Activated naive CD4-positive, alpha-beta T cell treated with anti-CD3 and anti-CD28 coated beads for 36 hours (primary cell): ENCODE measurements at regions of chr1 and their contacts with region 1.

Region 1: GRCh38 chr1:234730770-234731568 is 121.0 kb upstream of the IRF2BP2 start:
- DNase-seq: peak; percentile 83
- H3K4me3 Mint-ChIP-seq: peak overlapping the region; percentile 25
- H3K27ac Mint-ChIP-seq: peak overlapping the region; percentile 89
- H3K4me1 Mint-ChIP-seq: peaks cover 51% of the 10 kb centered on the region
- H3K27me3 Mint-ChIP-seq: no peaks in the 10 kb centered on the region

Region 2: GRCh38 chr1:234271243-234271606 is 459.7 kb before region 1 on chr1:
- CTCF ChIA-PET with region 1: no interaction called
- intact Hi-C with region 1: loop called (anchors 1 kb)
- DNase-seq: peak; percentile 22
- H3K4me3 Mint-ChIP-seq: no peak overlapping the region
- H3K27ac Mint-ChIP-seq: no peak overlapping the region
- H3K4me1 Mint-ChIP-seq: peaks cover 26% of the 10 kb centered on the region
- H3K27me3 Mint-ChIP-seq: peaks cover 28% of the 10 kb centered on the region

Region 3: GRCh38 chr1:234699795-234700665 is 30.9 kb before region 1 on chr1:
- CTCF ChIA-PET with region 1: no interaction called
- intact Hi-C with region 1: no loop called
- DNase-seq: peak; percentile 45
- H3K4me3 Mint-ChIP-seq: no peak overlapping the region
- H3K27ac Mint-ChIP-seq: no peak overlapping the region
- H3K4me1 Mint-ChIP-seq: peaks cover 12% of the 10 kb centered on the region
- H3K27me3 Mint-ChIP-seq: no peaks in the 10 kb centered on the region

Region 4: GRCh38 chr1:234758851-234759250 is 27.9 kb after region 1 on chr1:
- CTCF ChIA-PET with region 1: no interaction called
- intact Hi-C with region 1: loop called (anchors 2 kb)
- DNase-seq: peak; percentile 61
- H3K4me3 Mint-ChIP-seq: no peak overlapping the region
- H3K27ac Mint-ChIP-seq: peak overlapping the region; percentile 1
- H3K4me1 Mint-ChIP-seq: peaks cover 18% of the 10 kb centered on the region
- H3K27me3 Mint-ChIP-seq: no peaks in the 10 kb centered on the region

Region 5: GRCh38 chr1:234925440-234926263 is 194.7 kb after region 1 on chr1:
- CTCF ChIA-PET with region 1: no interaction called
- intact Hi-C with region 1: loop called (anchors 1 kb)
- DNase-seq: peak; percentile 40
- H3K4me3 Mint-ChIP-seq: peak overlapping the region; percentile 39
- H3K27ac Mint-ChIP-seq: peak overlapping the region; percentile 75
- H3K4me1 Mint-ChIP-seq: peaks cover 50% of the 10 kb centered on the region
- H3K27me3 Mint-ChIP-seq: no peaks in the 10 kb centered on the region

Region 6: DNA sequence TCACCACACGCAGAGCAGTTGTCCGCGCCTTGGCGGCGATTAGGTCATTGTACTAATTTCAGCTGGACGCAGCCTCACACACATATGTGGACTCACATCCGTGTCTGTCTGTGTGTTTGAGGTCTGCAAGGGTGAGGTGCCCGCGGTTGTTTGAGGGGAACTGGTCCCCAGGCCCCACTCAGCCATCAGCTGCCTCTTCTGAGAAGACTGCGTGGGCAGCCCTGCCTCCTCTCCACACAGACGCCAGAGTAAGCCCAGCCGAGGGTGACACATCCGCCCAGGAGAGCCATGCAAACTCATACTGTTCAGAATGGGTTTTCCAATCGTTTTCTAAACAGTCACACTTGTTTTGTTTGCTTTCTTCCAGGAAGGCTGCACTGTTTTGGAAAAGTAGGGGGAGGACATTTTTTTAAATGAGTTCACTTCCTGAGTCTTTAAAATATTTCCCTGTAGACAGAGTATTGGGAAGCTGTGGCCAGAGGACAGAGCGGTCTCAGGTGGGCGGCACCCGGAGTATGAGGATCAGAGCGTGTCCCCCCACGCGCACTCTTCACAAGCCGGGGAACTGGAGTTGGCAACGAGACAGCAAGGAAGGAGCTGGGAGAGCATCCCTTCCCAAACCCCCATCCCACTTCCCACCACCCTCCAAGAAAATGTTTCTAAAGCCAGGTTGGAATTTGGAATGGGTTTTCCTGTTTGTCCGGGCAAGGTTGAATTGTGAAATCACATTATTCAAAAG is 344.4 kb after region 1 on chr1:
- CTCF ChIA-PET with region 1: no interaction called
- intact Hi-C with region 1: loop called (anchors 1 kb)
- DNase-seq: peak; percentile 83
- H3K4me3 Mint-ChIP-seq: peak overlapping the region; percentile 0
- H3K27ac Mint-ChIP-seq: peak overlapping the region; percentile 90
- H3K4me1 Mint-ChIP-seq: peaks cover 36% of the 10 kb centered on the region
- H3K27me3 Mint-ChIP-seq: no peaks in the 10 kb centered on the region